K562 (cell line): ENCODE measurements at regions of chr7 and their contacts with region 1.

Region 1: GRCh38 chr7:103524042-103524907 is 78.3 kb upstream of the SLC26A5 start:
- DNase-seq: peak; percentile 29 to 67 (median 46)
- ATAC-seq: peak; percentile 93
- H3K4me3 ChIP-seq: no peak overlapping the region
- H3K27ac ChIP-seq: no peak overlapping the region
- H3K4me1 ChIP-seq: peaks cover 0 to 3% of the 10 kb centered on the region in 2 experiments; a peak in 2 of 5 replicates
- H3K27me3 ChIP-seq: no peaks in the 10 kb centered on the region; a peak in 1 of 5 replicates
- CTCF ChIP-seq: peak; percentile 69 to 84 (median 74)
- EP300 ChIP-seq: no peak
- POLR2A ChIP-seq: no peak
- RAD21 ChIP-seq: peak; percentile 95 to 96

Region 2: GRCh38 chr7:103343332-103343731 is 180.9 kb before region 1 on chr7:
- CTCF ChIA-PET with region 1: no interaction called
- POLR2A ChIA-PET with region 1: no interaction called
- in situ Hi-C with region 1: no loop called
- intact Hi-C with region 1: no loop called
- DNase-seq: peak in 1 of 4 experiments; percentile 21
- ATAC-seq: no peak
- H3K4me3 ChIP-seq: peak overlapping the region; percentile 82
- H3K27ac ChIP-seq: peak overlapping the region; percentile 93
- H3K4me1 ChIP-seq: peaks cover 3 to 9% of the 10 kb centered on the region in 2 experiments; a peak in 3 of 5 replicates
- H3K27me3 ChIP-seq: no peaks in the 10 kb centered on the region
- CTCF ChIP-seq: no peak
- EP300 ChIP-seq: no peak
- POLR2A ChIP-seq: no peak
- RAD21 ChIP-seq: no peak

Region 3: GRCh38 chr7:103564416-103564815 is 40.1 kb after region 1 on chr7:
- CTCF ChIA-PET with region 1: no interaction called
- POLR2A ChIA-PET with region 1: no interaction called
- in situ Hi-C with region 1: no loop called
- intact Hi-C with region 1: loop called (anchors 1 kb)
- DNase-seq: peak in 2 of 4 experiments; percentile 28 to 32
- ATAC-seq: peak; percentile 71
- H3K4me3 ChIP-seq: no peak overlapping the region
- H3K27ac ChIP-seq: no peak overlapping the region
- H3K4me1 ChIP-seq: peaks cover 0 to 4% of the 10 kb centered on the region in 2 experiments; a peak in 1 of 5 replicates
- H3K27me3 ChIP-seq: no peaks in the 10 kb centered on the region
- CTCF ChIP-seq: no peak
- EP300 ChIP-seq: no peak
- POLR2A ChIP-seq: no peak
- RAD21 ChIP-seq: no peak

Region 4: GRCh38 chr7:103752997-103753396 is 228.7 kb after region 1 on chr7:
- CTCF ChIA-PET with region 1: no interaction called
- POLR2A ChIA-PET with region 1: no interaction called
- in situ Hi-C with region 1: no loop called
- intact Hi-C with region 1: loop called (anchors 1 kb)
- DNase-seq: peak in 1 of 4 experiments; percentile 25
- ATAC-seq: peak; percentile 73
- H3K4me3 ChIP-seq: no peak overlapping the region
- H3K27ac ChIP-seq: no peak overlapping the region
- H3K4me1 ChIP-seq: no peaks in the 10 kb centered on the region
- H3K27me3 ChIP-seq: no peaks in the 10 kb centered on the region
- CTCF ChIP-seq: peak in 2 of 3 experiments; percentile 28 to 50; a peak in 4 of 6 replicates
- EP300 ChIP-seq: no peak
- POLR2A ChIP-seq: no peak
- RAD21 ChIP-seq: peak; percentile 40 to 79